ENCODE measurements at regions of chr7 and their contacts with region 1.

Region 1: DNA sequence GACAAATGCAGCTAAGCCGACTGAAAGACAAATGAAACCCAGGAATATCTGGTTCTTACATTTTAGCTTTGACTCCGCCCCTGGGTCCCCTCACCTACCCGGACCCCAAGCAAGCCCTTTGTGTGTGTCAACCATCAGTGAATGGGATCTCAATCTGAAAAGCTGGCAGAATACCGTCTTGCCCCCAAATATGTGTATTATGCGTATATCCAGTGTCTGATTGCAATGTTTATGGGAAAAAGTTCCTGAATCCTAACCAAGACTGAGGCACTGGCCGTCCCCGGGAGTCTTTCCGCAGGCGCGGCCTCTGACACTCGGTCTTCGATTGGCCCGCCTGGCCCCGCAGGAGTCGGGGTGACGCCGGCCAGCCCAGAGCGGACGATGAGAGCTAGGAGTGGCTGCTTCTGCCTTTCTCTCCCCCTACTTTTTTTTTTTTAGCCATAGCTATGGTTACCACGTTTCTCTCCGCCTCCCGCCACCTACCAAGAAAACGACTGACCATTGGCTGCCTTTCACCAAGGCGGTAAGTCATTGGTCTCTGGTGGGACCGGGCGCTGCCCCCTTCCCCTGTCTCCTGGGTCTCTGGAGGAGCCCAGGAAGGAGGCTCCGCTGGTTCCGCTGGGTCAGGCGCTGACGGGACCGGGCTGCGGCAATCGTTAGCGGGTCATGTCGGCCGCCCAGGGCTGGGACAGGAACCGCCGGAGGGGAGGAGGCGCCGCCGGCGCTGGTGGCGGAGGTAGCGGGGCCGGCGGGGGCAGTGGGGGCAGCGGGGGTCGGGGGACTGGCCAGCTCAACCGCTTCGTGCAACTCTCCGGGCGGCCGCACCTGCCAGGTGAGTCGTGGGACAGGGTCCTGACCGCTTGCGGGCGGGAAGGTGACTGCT is at the start of gene KLHDC10:
- DNase-seq: peak; percentile 98
- ATAC-seq: peak; percentile 100
- H3K4me3 ChIP-seq: peak within 1 kb of the TSS; percentile 95 to 96
- H3K27ac ChIP-seq: peak within 1 kb of the TSS in 1 of 2 donors; percentile 48
- H3K4me1 ChIP-seq: no peaks in the 10 kb centered on the region
- H3K27me3 ChIP-seq: no peaks in the 10 kb centered on the region
- total RNA-seq, gene KLHDC10: 27.2 to 28.5 TPM

Region 2: DNA sequence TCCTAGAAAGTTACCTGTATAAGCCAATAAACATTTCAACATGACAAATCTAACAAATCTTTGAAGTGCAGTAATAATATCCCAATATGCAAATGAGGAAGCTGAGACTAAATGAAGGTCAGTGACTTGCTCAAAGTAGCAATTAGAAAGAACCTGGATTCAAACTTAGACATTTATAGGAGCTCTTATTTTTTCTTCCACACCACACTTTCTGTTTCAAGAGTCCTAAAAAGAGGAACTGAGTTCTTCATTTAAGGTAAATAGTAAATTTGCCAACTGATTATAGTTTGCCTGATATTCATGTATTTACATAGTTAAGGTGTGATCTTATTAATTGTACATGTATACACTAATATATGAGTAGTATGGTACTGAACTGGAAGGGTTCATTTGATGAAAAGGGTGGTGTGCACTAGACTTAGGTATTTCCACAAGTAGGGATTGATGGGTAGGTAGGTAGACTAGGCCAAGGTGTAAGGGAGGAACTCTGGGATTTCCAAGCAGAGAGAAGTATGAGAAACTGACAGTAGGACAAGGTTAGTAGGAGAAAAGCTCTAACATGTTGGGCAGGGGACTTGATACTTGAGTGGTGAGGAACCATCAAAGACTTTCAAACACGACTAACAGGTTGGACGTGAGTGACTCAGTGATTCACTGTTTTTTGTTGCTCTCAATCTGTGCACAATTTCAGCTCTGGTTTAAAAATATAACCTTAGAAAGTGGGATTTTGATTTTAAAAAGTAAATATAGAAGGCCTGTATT is 44.3 kb after region 1 on chr7:
- intact Hi-C with region 1: no loop called
- DNase-seq: no peak
- ATAC-seq: no peak
- H3K4me3 ChIP-seq: no peak overlapping the region
- H3K27ac ChIP-seq: no peak overlapping the region
- H3K4me1 ChIP-seq: no peaks in the 10 kb centered on the region
- H3K27me3 ChIP-seq: no peaks in the 10 kb centered on the region

Region 3: DNA sequence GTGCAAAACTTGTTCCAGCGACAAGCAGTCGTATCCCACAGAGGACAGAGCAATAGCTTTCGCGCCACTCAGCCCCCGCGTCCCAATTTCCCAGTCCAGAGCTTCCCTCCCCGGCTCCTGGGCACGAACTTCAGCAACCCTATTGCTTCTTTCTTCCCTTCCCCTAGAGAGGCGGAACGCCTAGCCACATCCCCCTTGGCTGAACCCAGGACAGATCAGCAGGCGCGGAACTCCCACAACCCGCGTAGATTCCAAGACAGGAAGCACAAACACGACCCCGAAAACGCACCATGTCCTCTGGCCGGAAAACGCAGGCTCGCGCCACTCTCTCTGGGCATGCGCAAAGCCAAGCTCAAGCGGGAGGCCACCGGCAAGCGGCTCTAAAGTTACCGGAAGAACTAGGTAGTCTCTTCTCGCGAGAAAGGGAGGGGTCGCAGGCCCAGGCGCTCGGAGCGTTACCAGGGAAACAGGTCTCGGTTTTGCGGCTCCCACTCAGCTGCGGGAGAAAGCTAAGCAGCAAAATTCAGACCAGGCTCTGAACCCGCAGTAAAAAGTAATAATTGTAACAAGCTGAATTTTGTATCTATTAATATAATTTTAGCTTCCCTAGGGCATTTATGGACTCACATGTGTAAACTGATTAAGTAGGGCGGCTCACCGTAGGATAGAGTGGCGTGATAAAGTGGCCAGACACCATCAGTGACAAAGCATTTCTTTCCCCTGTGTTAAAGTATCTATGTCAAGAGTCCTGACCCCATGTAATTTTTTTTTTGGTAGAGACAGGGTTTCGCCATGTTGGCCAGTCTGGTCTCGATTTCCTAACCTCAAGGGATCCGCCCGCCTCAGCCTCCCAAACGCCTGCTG is 135.1 kb after region 1 on chr7 and contains the start of gene TMEM209:
- intact Hi-C with region 1: loop called (anchors 5 to 10 kb)
- DNase-seq: peak; percentile 97
- ATAC-seq: peak; percentile 99
- H3K4me3 ChIP-seq: peak within 1 kb of the TSS; percentile 84 to 97
- H3K27ac ChIP-seq: peak within 1 kb of the TSS in 1 of 2 donors; percentile 90
- H3K4me1 ChIP-seq: no peaks in the 10 kb centered on the region
- H3K27me3 ChIP-seq: no peaks in the 10 kb centered on the region
- total RNA-seq, gene TMEM209: 11.7 to 13.7 TPM

Region 4: DNA sequence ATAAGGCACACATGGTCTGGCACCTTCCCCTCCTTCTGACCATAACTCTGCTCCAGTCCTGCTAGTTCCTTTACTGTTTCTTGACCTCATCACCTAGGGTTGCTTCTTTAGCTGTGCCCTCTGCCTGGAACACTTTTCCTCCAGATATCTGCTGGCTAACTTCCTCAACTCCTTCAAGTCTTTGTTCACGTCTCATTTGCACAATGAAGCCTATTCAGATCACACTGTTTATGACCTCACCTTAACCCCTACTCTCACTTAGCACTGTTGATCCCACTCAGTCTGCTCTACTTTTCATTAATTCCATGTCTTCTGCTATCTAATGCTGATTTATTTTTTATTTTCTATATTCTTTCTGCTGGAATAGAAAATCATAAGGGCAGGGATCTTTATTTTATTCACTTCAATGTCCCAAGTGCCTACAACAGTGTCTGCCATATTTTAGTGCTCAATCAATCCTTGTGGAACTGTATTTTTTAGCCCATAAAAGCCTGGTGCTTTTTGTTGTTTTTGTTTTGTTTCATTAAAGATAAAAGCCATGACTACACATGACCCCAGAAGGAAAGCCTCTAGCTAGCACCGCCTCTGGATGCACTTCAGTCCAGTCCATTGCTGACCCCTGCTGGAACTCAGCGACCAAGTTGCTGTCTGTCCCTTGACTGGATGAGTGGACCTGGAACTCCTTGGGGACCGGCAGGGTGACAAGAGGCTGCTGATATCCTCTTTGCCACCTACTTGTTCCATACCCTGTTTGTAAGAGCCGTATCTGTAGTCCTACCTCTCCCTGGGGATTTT is 651.5 kb after region 1 on chr7:
- intact Hi-C with region 1: loop called in 1 of 2 experiments (anchors 10 kb)
- DNase-seq: peak; percentile 76 to 85
- ATAC-seq: peak; percentile 82
- H3K4me3 ChIP-seq: no peak overlapping the region
- H3K27ac ChIP-seq: no peak overlapping the region
- H3K4me1 ChIP-seq: no peaks in the 10 kb centered on the region
- H3K27me3 ChIP-seq: no peaks in the 10 kb centered on the region

Region 5: GRCh38 chr7:130831817-130832481 is 761.7 kb after region 1 on chr7:
- intact Hi-C with region 1: loop called in 1 of 2 experiments (anchors 5 kb)
- DNase-seq: no peak
- ATAC-seq: no peak
- H3K4me3 ChIP-seq: no peak overlapping the region
- H3K27ac ChIP-seq: no peak overlapping the region
- H3K4me1 ChIP-seq: no peaks in the 10 kb centered on the region
- H3K27me3 ChIP-seq: no peaks in the 10 kb centered on the region